ENCODE measurements at regions of chr11 and their contacts with region 1.

Region 1: GRCh38 chr11:58549644-58550043 is 26.0 kb downstream of the LPXN start:
- DNase-seq: no peak
- ATAC-seq: no peak
- H3K4me3 ChIP-seq: no peak overlapping the region
- H3K4me3 Mint-ChIP-seq: no peak overlapping the region
- H3K27ac ChIP-seq: no peak overlapping the region
- H3K27ac Mint-ChIP-seq: peak overlapping the region in 1 of 9 donors; percentile 63
- H3K4me1 ChIP-seq: no peaks in the 10 kb centered on the region
- H3K4me1 Mint-ChIP-seq: peaks cover 1 to 49% (median 20%) of the 10 kb centered on the region in 7 donors
- H3K27me3 ChIP-seq: no peaks in the 10 kb centered on the region
- H3K27me3 Mint-ChIP-seq: no peaks in the 10 kb centered on the region

Region 2: DNA sequence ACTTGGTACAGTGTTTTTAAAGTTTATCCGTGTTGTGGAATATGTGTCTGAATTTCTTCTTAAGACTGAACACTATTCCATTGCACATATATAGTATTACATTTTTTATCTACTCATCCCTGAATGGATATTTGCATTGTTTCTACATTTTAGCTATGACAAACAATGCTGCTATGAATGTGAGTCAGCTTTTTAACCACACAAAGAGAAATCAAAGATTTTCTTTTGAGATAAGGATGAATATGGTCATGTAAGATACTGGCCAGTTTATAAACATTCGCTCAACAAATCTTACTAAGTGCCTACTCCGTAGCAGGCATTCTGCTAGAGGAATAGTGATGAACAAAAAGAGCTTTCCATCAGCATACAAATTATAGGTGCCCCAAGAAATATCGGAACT is 1784.7 kb before region 1 on chr11:
- CTCF ChIA-PET with region 1: no interaction called
- POLR2A ChIA-PET with region 1: no interaction called
- intact Hi-C with region 1: no loop called
- DNase-seq: no peak
- ATAC-seq: no peak
- H3K4me3 ChIP-seq: no peak overlapping the region
- H3K4me3 Mint-ChIP-seq: no peak overlapping the region
- H3K27ac ChIP-seq: no peak overlapping the region
- H3K27ac Mint-ChIP-seq: no peak overlapping the region
- H3K4me1 ChIP-seq: no peaks in the 10 kb centered on the region
- H3K4me1 Mint-ChIP-seq: no peaks in the 10 kb centered on the region
- H3K27me3 ChIP-seq: no peaks in the 10 kb centered on the region
- H3K27me3 Mint-ChIP-seq: peaks cover 0 to 5% (median 0%) of the 10 kb centered on the region in 5 donors

Region 3: GRCh38 chr11:58530236-58530635 is 19.4 kb before region 1 on chr11:
- CTCF ChIA-PET with region 1: interaction called, 4 read pairs
- POLR2A ChIA-PET with region 1: interaction called, 9 read pairs
- intact Hi-C with region 1: loop called in 1 of 2 experiments (anchors 2 kb)
- DNase-seq: peak in 7 of 9 donors; percentile 49 to 73 (median 64)
- ATAC-seq: peak; percentile 81
- H3K4me3 ChIP-seq: peak overlapping the region; percentile 6
- H3K4me3 Mint-ChIP-seq: peak overlapping the region; percentile 10 to 73 (median 57)
- H3K27ac ChIP-seq: peak overlapping the region; percentile 65
- H3K27ac Mint-ChIP-seq: peak overlapping the region; percentile 59 to 99 (median 90)
- H3K4me1 ChIP-seq: peaks cover 7 to 41% of the 10 kb centered on the region in 2 donors
- H3K4me1 Mint-ChIP-seq: peaks cover 9 to 89% (median 55%) of the 10 kb centered on the region in 7 donors
- H3K27me3 ChIP-seq: no peaks in the 10 kb centered on the region
- H3K27me3 Mint-ChIP-seq: no peaks in the 10 kb centered on the region

Region 4: GRCh38 chr11:58675334-58676155 is 125.9 kb after region 1 on chr11:
- CTCF ChIA-PET with region 1: no interaction called
- POLR2A ChIA-PET with region 1: no interaction called
- intact Hi-C with region 1: no loop called
- DNase-seq: peak; percentile 37 to 75 (median 65)
- ATAC-seq: peak; percentile 83
- H3K4me3 ChIP-seq: no peak overlapping the region
- H3K4me3 Mint-ChIP-seq: no peak overlapping the region
- H3K27ac ChIP-seq: no peak overlapping the region
- H3K27ac Mint-ChIP-seq: no peak overlapping the region
- H3K4me1 ChIP-seq: no peaks in the 10 kb centered on the region
- H3K4me1 Mint-ChIP-seq: no peaks in the 10 kb centered on the region
- H3K27me3 ChIP-seq: peaks cover 0 to 4% of the 10 kb centered on the region in 2 donors
- H3K27me3 Mint-ChIP-seq: peaks cover 0 to 5% (median 0%) of the 10 kb centered on the region in 5 donors

Region 5: DNA sequence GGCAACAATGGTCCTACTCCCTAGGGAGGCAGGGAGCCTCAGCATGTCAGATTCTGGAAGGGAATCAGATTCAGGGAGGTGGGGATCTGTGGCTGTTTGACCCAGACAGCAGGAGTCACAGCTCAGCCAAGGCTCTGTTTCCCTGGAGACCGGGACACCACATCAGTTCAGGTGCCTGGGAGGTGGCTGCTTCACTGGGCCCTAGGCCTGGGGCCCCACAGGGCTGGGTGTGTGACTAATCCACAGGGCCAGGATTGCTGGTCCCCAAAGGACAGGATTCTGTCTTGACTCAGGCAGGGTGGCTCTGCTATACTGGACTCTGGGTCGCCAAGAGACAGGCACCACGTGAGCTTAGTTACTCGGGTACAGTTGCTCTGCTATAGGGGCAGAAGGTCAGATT is 805.6 kb after region 1 on chr11:
- CTCF ChIA-PET with region 1: no interaction called
- POLR2A ChIA-PET with region 1: no interaction called
- intact Hi-C with region 1: no loop called
- DNase-seq: no peak
- ATAC-seq: no peak
- H3K4me3 ChIP-seq: no peak overlapping the region
- H3K4me3 Mint-ChIP-seq: no peak overlapping the region
- H3K27ac ChIP-seq: no peak overlapping the region
- H3K27ac Mint-ChIP-seq: no peak overlapping the region
- H3K4me1 ChIP-seq: no peaks in the 10 kb centered on the region
- H3K4me1 Mint-ChIP-seq: no peaks in the 10 kb centered on the region
- H3K27me3 ChIP-seq: no peaks in the 10 kb centered on the region
- H3K27me3 Mint-ChIP-seq: peaks cover 0 to 40% (median 26%) of the 10 kb centered on the region in 5 donors